Right ventricle myocardium superior (tissue), 1 donor: ENCODE measurements at regions of chr1 and their contacts with region 1.

Region 1: DNA sequence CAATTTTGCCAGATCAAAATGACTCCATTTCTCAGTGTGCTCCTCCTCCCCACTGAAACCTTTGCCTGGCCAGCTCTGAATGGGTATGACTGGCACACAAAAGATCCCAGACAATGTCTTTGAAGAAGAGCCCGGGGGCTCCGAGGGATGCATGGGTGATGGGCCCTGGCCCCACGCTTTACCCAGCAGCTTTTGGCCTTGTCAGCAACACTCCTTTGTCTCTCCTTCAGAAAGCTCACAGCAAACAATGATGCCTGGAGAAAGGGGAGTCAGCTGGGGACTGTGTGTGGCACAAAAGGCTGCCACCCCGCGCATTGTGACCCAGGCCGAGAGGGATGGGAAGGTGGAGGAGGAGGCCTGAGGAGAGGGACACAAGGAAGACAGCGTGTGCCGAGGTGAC is 45.9 kb downstream of the PLXNA2 start:
- DNase-seq: no peak
- ATAC-seq: no peak

Region 2: DNA sequence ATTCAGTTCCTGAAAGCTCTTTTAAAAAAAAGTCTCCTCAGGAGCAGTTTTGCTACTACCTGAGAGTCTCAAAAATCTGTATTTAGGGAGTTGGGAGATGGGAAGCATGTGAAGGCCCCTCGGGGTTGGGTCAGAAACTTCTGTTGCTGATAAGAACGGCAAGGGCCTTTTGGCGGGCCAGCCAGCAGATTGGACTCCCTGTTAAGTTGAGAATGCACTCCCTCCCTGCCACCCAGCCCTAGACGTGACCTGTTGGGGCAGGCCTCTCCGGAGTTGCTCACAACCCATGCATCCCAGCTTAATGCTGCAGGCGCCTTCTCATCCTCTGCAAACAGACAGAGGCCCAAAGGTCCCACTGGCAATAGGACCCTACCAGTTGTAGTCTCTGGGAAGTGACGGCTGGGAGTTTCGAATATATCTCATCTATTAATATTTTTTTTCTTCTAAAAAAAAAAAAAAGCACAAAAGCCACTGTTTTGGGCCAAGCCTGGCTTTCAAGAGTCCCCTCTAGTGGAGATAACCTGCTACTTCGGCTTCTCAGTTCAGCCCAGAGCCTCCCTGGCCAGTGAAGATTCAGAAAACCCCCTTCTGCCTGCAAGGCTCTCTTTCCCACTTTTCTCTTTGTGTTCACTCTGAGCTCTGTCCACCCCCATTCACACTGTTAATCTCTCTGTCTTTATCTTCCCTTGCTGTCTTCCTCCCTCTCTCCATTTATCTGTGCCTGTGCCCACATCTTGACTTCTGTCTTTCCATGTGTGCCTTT is 40.7 kb after region 1 on chr1:
- intact Hi-C with region 1: loop called (anchors 5 kb)
- DNase-seq: no peak
- ATAC-seq: no peak